ENCODE measurements at regions of chr11 and their contacts with region 1.

Region 1: GRCh38 chr11:59171508-59172322 is at the start of gene DTX4:
- DNase-seq: no peak
- H3K4me3 ChIP-seq: peak within 1 kb of the TSS; percentile 70
- CTCF ChIP-seq: peak; percentile 99

Region 2: DNA sequence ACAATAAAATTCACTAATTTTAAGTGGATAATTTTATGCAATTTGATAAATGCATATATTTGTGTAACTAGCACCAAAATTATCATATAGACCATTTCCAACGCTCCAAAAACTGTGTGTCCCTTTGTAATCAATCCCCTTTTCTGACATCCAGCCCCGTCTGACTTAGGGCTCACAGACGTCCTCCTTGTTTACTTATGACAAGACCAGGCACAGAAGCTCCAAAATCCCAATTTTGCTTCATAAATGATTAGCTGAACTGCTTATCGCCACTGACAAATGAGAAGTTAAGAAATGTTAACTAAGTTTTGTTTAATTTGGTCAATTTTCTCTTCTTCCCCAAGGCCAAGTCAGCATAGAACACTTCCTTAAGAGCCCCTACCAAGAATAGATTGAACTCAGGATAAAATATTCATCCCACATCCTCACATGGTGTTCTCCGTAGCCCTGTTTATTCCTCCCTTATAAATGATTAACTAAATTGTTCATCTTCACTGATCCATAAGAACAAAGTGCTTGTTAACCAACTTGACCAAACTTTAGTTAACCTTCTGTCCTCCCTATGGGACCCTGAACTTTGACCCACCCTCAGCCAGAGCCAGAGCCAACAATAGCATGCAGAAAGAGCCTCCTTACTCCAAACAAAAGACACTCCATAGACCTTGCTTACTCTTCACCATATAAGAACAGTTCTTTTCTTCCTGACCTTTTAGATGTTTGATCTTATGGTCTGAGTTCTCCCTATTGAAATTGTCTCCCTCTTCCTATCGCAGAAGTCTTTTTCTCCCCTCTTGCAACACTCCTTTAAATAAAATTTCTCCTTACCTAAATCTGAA is 409.2 kb before region 1 on chr11:
- CTCF ChIA-PET with region 1: no interaction called
- POLR2A ChIA-PET with region 1: no interaction called
- DNase-seq: no peak
- H3K4me3 ChIP-seq: no peak overlapping the region
- CTCF ChIP-seq: no peak

Region 3: GRCh38 chr11:59142530-59143507 is 28.9 kb before region 1 on chr11 and contains the start of gene FAM111A:
- CTCF ChIA-PET with region 1: interaction called, 30 read pairs
- POLR2A ChIA-PET with region 1: no interaction called
- DNase-seq: peak; percentile 36
- H3K4me3 ChIP-seq: peak within 1 kb of the TSS; percentile 92
- CTCF ChIP-seq: peak; percentile 54

Region 4: DNA sequence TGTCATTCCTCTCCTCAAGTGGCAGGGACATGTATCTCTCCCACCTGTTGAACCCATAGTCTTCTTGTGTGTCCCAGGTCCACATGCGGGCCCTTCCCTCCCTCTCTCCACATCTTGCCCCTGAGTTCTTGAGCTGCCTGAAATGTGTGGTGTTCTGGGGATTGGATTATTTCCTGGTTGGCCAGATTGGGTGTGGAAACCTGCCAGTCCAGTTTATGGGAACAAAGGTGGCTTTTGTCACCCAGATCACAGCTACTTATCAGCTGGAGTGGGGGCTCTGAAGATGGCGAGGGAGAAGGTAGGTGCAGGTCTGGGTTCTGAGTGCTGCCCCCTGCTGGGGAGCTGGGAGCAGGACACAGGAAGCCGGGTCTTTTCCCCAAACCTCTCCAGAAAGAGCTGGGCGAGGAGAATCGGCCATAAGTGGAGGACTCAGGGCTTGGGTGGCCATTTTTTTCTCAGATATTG is 14.4 kb after region 1 on chr11:
- CTCF ChIA-PET with region 1: interaction called, 75 read pairs
- POLR2A ChIA-PET with region 1: interaction called, 3 read pairs
- DNase-seq: no peak
- H3K4me3 ChIP-seq: no peak overlapping the region
- CTCF ChIP-seq: peak; percentile 62

Region 5: DNA sequence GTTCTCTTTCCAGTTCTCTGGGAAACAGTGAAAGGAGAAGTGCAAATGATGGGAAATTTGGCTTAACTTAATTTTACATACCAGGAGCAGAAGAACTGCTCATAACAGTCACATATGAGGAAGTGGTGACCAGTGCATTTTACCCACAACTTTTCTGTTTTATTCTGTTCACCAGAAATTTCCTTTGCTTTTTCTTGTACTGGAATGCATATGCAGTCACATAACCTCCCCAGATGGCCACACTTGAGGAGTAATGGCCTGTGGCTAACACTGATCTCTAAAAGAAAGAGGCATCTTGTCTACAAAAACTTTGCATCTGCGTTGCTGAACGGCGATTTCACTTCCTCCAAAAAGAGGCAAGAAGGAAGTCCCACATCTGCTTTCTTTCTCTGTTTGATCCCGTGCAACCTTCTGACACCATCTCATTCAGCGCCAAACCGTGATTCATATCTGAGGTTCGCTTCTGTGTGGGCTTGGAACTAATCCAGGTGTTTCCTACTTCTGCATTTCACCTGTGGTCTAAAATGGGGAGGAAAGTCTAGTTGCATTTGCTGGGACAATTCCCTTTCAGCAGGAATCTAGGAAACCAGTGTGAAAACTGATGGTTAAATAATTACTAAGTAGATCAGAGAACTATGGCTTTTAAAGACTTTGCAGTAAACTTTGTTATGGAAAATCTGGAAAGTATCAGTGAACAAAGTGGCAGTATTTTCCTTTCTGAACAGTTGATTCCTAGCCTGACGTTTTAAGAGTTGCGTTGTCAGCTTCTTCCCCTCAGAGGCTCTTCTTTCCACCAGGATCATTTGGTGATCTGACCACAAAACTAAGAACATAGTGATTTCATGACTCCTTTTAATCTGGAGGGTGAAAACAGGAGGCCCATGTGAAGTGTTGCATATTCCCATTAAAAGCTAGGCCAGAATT is 45.2 kb after region 1 on chr11:
- CTCF ChIA-PET with region 1: interaction called, 450 read pairs
- POLR2A ChIA-PET with region 1: no interaction called
- DNase-seq: no peak
- H3K4me3 ChIP-seq: no peak overlapping the region
- CTCF ChIP-seq: no peak

Region 6: GRCh38 chr11:59283825-59284772 is 112.4 kb after region 1 on chr11:
- CTCF ChIA-PET with region 1: interaction called, 19 read pairs
- POLR2A ChIA-PET with region 1: no interaction called
- DNase-seq: no peak
- H3K4me3 ChIP-seq: no peak overlapping the region
- CTCF ChIP-seq: peak; percentile 80

Region 7: DNA sequence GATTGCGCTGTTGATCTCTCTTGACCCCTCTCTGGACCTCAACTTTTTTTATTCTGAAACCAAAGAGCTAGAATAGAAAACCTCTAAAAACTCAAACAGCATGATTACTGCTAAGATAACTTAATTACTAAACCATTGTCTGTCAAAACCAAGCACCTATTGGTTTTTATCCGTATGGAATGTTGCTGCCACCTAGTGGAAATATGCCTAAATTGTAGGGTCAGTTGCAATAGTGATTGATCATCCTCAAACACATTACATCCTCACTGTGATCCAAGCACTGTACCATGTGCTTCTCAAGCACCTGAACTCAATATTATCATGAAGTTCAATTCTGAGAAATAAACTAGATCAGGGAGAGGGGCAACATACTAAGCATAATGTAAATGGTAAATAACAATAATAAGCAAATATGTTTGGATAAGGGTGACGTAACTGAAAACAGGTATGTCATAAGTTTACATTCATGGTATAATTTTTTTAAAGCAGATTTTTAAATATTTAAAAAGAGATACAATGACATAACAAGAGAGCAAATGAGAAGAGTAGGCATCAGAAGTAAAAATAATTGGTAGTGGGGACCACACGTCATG is 258.3 kb after region 1 on chr11:
- CTCF ChIA-PET with region 1: interaction called, 21 read pairs
- POLR2A ChIA-PET with region 1: no interaction called
- DNase-seq: no peak
- H3K4me3 ChIP-seq: no peak overlapping the region
- CTCF ChIP-seq: peak; percentile 51